ENCODE measurements at regions of chr13 and their contacts with region 1.

Region 1: DNA sequence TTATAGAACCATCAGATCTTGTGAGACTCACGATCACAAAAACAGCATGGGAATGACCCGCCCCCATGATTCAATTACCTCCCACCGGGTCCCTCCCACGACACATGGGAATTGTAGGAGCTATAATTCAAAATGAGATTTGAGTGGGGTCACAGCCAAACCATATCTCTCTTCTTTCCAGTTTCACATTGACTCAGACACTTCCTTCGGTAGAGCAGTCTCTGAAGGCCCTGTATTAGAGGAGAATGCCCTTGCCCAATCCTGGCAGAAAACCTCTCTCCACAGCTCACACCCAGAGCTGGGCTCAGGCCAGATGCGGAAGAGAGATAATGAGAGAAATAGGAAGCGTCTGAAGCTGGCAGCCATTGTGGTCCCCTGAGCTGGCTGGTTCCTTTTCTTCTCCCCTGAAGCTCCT is 72.4 kb upstream of the CLDN10 start:
- DNase-seq: peak in 1 of 2 donors; percentile 5
- ATAC-seq: peak in 5 of 8 donors; percentile 24 to 45 (median 36)
- H3K4me3 ChIP-seq: no peak overlapping the region
- H3K27ac ChIP-seq: peak overlapping the region in 1 of 10 donors; percentile 59
- H3K4me1 ChIP-seq: peaks cover 0 to 19% (median 0%) of the 10 kb centered on the region in 9 donors
- H3K27me3 ChIP-seq: peaks cover 0 to 5% (median 0%) of the 10 kb centered on the region in 7 donors
- CTCF ChIP-seq: no peak

Region 2: DNA sequence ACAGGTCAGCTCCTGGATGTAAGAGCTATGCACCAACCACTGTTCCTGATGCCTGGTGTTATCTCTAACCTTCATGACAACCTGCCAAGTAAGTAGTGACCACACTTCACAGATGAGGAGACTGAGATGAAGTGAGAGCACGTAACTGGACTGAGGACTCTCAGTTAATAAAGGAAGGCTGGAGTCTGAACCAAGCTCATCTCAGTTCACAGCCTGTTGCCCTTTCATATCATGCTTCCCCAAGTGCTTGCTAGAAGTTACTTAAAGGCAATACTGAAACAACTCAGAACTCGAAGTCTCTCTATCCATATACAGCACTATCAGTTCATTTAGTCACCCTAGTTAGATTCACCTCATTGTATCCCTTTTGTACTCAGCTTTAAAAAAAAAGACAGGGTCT is 298.6 kb before region 1 on chr13:
- intact Hi-C with region 1: loop called in 4 of 10 experiments (anchors 5 to 10 kb)
- DNase-seq: no peak
- ATAC-seq: no peak
- H3K4me3 ChIP-seq: no peak overlapping the region
- H3K27ac ChIP-seq: peak overlapping the region in 1 of 10 donors; percentile 31
- H3K4me1 ChIP-seq: peaks cover 0 to 19% (median 11%) of the 10 kb centered on the region in 9 donors
- H3K27me3 ChIP-seq: no peaks in the 10 kb centered on the region
- CTCF ChIP-seq: no peak

Region 3: GRCh38 chr13:95301183-95301967 is 178.8 kb before region 1 on chr13 and contains the start of gene ABCC4:
- intact Hi-C with region 1: loop called in 2 of 10 experiments (anchors 10 kb)
- DNase-seq: peak; percentile 57 to 69
- ATAC-seq: peak; percentile 74 to 94 (median 85)
- H3K4me3 ChIP-seq: peak within 1 kb of the TSS; percentile 42 to 89 (median 75)
- H3K27ac ChIP-seq: peak within 1 kb of the TSS; percentile 57 to 92 (median 76)
- H3K4me1 ChIP-seq: peaks cover 0 to 41% (median 22%) of the 10 kb centered on the region in 9 donors
- H3K27me3 ChIP-seq: peaks cover 0 to 10% (median 0%) of the 10 kb centered on the region in 7 donors
- CTCF ChIP-seq: no peak
- total RNA-seq, gene ABCC4: 2.3 to 6.7 (median 4.1) TPM

Region 4: GRCh38 chr13:95403828-95404522 is 76.2 kb before region 1 on chr13:
- intact Hi-C with region 1: loop called in 2 of 10 experiments (anchors 2 to 5 kb)
- DNase-seq: peak; percentile 82 to 83
- ATAC-seq: peak; percentile 88 to 96 (median 92)
- H3K4me3 ChIP-seq: peak overlapping the region in 9 of 10 donors; percentile 17 to 55 (median 45)
- H3K27ac ChIP-seq: no peak overlapping the region
- H3K4me1 ChIP-seq: peaks cover 0 to 9% (median 7%) of the 10 kb centered on the region in 9 donors
- H3K27me3 ChIP-seq: peaks cover 0 to 6% (median 0%) of the 10 kb centered on the region in 7 donors
- CTCF ChIP-seq: peak; percentile 90 to 97 (median 95)